Gastrocnemius medialis (tissue), 4 donors: ENCODE measurements at regions of chr11 and their contacts with region 1.

Region 1: GRCh38 chr11:18115360-18116127 is 9.7 kb upstream of the SAAL1 start:
- DNase-seq: peak in 1 of 2 donors; percentile 33
- ATAC-seq: peak; percentile 60 to 93
- H3K4me3 ChIP-seq: no peak overlapping the region
- H3K27ac ChIP-seq: no peak overlapping the region
- H3K4me1 ChIP-seq: no peaks in the 10 kb centered on the region
- H3K27me3 ChIP-seq: no peaks in the 10 kb centered on the region
- CTCF ChIP-seq: peak; percentile 59 to 86 (median 72)
- POLR2A ChIP-seq: no peak

Region 2: GRCh38 chr11:18731949-18732821 is 616.6 kb after region 1 on chr11:
- in situ Hi-C with region 1: loop called in 2 of 4 experiments (anchors 25 kb)
- intact Hi-C with region 1: loop called (anchors 5 kb)
- DNase-seq: peak in 1 of 2 donors; percentile 24
- ATAC-seq: peak in 1 of 2 donors; percentile 71
- H3K4me3 ChIP-seq: no peak overlapping the region
- H3K27ac ChIP-seq: no peak overlapping the region
- H3K4me1 ChIP-seq: no peaks in the 10 kb centered on the region
- H3K27me3 ChIP-seq: no peaks in the 10 kb centered on the region
- CTCF ChIP-seq: peak; percentile 65 to 93 (median 81)
- POLR2A ChIP-seq: no peak